Common myeloid progenitor, CD34-positive (primary cell): ENCODE measurements at regions of chr13 and their contacts with region 1.

Region 1: DNA sequence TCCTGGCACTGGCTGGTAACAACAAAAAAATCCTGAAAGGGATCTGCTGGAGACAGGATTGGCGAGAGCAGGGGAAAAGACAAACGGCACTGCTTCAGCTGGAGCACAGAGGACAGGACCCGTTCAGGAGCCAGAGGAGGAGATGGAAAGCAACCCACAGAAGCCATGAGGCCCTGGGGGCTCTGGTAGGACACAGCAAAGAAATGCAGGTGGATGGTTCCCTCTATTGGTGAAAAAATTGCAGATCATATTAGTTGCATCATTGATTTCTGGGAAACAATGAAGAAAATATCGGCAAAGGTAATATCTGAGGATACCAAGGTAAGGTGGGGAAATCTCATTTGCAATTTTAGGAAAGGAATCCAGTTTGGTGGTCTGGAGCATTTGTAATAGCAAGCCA is 25.7 kb upstream of the TPP2 start:
- DNase-seq: no peak
- H3K4me3 ChIP-seq: no peak overlapping the region
- H3K27ac ChIP-seq: no peak overlapping the region
- H3K4me1 ChIP-seq: no peaks in the 10 kb centered on the region
- H3K27me3 ChIP-seq: peaks cover 0 to 3% (median 0%) of the 10 kb centered on the region in 5 experiments

Region 2: DNA sequence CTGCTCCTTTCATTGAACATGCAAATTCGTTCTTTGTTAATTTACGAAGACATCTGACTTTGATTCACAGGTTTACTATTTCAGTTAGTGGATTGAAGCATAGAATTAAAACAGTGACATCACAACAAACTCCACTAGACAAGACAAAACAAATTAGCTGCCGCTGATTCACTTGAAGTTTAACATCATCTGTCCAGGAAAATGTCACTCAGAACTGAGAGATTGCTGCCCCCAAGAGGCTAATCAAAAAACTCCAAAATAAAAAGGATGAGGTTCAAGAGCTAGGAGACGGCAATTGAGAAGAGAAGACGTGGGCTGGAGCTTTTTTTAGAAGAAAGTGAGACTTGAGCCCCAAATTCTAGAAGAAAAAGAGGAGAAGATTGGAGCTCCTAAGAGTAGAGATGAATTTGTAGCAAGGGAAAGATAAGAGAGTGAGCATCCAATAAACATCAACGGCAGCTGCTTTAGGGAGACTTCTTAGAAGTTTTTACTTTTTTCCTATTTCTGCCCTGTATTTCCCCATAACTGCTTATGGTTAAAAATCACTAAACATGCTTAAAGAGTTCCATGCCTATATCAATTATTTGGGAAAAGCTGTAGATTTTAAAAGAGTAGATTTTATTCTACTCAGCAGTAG is 15.0 kb before region 1 on chr13:
- CTCF ChIA-PET with region 1: interaction called, 23 read pairs
- POLR2A ChIA-PET with region 1: no interaction called
- DNase-seq: peak; percentile 27 to 50 (median 46)
- H3K4me3 ChIP-seq: no peak overlapping the region
- H3K27ac ChIP-seq: no peak overlapping the region
- H3K4me1 ChIP-seq: no peaks in the 10 kb centered on the region
- H3K27me3 ChIP-seq: no peaks in the 10 kb centered on the region